ENCODE measurements at regions of chr17 and their contacts with region 1.

Region 1: DNA sequence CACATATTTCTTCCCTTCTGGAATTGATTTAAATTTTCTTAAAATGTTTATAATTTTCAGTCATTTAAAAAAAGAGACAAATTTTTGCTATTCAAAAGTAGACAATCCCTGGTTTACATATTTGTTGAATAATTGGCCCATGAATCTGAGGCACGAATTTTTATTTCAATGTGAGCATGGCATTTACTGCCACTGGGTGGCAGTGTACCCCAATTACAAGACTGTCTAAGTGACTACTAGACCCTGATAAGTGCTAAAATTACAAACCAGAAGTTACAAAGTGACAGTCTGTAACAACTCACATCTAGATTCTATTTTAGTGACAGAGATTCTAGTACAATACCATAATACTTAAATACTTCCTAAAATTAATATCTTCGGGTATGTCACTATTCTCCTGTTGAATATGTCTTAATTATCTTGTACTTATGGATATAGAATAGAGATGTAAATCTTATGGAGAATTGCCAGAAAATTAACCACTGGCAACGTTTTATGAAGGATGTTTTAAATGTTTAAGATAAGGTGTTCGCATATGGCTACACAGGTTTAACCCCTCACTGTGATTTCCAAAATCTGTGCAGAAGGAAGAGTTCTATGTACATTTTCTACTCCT is 235.8 kb downstream of the MAP2K4 start:
- DNase-seq: peak; percentile 45
- ATAC-seq: no peak
- H3K4me3 Mint-ChIP-seq: no peak overlapping the region
- H3K27ac Mint-ChIP-seq: no peak overlapping the region
- H3K4me1 Mint-ChIP-seq: no peaks in the 10 kb centered on the region
- H3K27me3 Mint-ChIP-seq: peaks cover 2% of the 10 kb centered on the region

Region 2: GRCh38 chr17:12180644-12181261 is 75.7 kb before region 1 on chr17:
- CTCF ChIA-PET with region 1: no interaction called
- POLR2A ChIA-PET with region 1: no interaction called
- intact Hi-C with region 1: loop called in 1 of 2 experiments (anchors 2 kb)
- DNase-seq: peak; percentile 38
- ATAC-seq: no peak
- H3K4me3 Mint-ChIP-seq: no peak overlapping the region
- H3K27ac Mint-ChIP-seq: no peak overlapping the region
- H3K4me1 Mint-ChIP-seq: no peaks in the 10 kb centered on the region
- H3K27me3 Mint-ChIP-seq: peaks cover 3% of the 10 kb centered on the region

Region 3: GRCh38 chr17:12667299-12667958 is 410.9 kb after region 1 on chr17:
- CTCF ChIA-PET with region 1: interaction called, 4 read pairs
- POLR2A ChIA-PET with region 1: no interaction called
- intact Hi-C with region 1: loop called in 1 of 2 experiments (anchors 2 kb)
- DNase-seq: no peak
- ATAC-seq: no peak
- H3K4me3 Mint-ChIP-seq: no peak overlapping the region
- H3K27ac Mint-ChIP-seq: no peak overlapping the region
- H3K4me1 Mint-ChIP-seq: no peaks in the 10 kb centered on the region
- H3K27me3 Mint-ChIP-seq: peaks cover 28% of the 10 kb centered on the region

Region 4: GRCh38 chr17:12744298-12744697 is 487.8 kb after region 1 on chr17:
- CTCF ChIA-PET with region 1: interaction called, 3 read pairs
- POLR2A ChIA-PET with region 1: no interaction called
- intact Hi-C with region 1: loop called (anchors 1 to 5 kb)
- DNase-seq: no peak
- ATAC-seq: no peak
- H3K4me3 Mint-ChIP-seq: no peak overlapping the region
- H3K27ac Mint-ChIP-seq: no peak overlapping the region
- H3K4me1 Mint-ChIP-seq: no peaks in the 10 kb centered on the region
- H3K27me3 Mint-ChIP-seq: peaks cover 4% of the 10 kb centered on the region

Region 5: DNA sequence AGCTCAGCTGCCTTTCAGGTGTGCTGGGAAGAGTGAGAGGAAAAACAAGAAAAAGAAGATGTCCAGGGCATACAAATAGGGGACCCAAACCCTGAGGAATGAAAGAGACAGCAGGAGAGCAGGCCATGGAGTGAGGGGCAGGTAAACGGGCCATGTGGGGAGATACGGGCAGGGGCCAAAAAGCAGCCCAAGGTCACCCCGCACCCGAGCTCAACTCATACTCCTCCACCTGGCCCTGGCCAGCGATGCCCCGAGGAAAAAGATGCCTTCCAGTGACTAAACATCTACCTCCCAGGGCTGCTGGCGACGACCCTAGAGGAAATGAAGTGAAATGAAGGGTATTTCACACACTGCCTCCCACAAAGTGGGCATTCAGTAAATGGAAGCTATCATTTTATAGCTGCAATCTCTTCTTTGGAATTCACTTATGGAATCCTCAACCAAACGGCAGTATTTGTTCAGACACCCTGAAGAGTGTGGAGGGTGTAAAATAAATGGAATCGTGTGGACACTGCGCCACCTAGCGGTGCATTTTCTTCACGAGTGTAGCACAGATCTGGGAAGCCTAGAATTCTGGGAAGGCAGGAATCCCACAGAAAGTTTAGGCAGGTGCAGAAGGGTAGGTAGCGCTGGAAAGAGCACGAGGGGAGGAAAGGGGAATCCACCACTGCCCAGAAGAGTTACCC is 746.4 kb after region 1 on chr17:
- CTCF ChIA-PET with region 1: no interaction called
- POLR2A ChIA-PET with region 1: no interaction called
- intact Hi-C with region 1: loop called (anchors 1 to 5 kb)
- DNase-seq: peak; percentile 71
- ATAC-seq: no peak
- H3K4me3 Mint-ChIP-seq: no peak overlapping the region
- H3K27ac Mint-ChIP-seq: no peak overlapping the region
- H3K4me1 Mint-ChIP-seq: no peaks in the 10 kb centered on the region
- H3K27me3 Mint-ChIP-seq: no peaks in the 10 kb centered on the region